ENCODE measurements at regions of chr9 and their contacts with region 1.

Region 1: DNA sequence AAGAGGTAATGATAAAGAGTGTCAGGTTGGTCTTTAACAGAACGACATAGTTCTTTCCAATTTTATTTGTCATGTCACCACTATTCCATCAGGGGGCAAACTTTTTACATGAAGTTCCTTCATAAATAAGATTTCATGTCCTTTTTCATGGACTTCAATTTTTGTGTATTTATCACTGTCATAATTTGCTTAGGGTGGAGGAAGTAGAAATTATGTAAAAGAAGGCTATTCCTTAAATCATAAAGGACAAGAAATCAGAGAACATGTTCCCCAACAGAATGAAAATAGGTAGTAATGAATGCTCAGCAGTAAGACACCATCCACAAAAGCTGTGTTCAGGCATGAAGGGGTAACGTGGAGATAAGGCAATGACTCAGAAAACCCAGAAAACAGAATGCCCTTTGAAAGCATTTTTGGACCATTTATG is 72.7 kb downstream of the ZFAND5 start:
- DNase-seq: no peak
- ATAC-seq: peak in 1 of 4 donors; percentile 65
- H3K4me3 ChIP-seq: no peak overlapping the region
- H3K27ac ChIP-seq: peak overlapping the region in 1 of 12 donors; percentile 74
- H3K4me1 ChIP-seq: peaks cover 0 to 28% (median 3%) of the 10 kb centered on the region in 12 donors
- H3K27me3 ChIP-seq: no peaks in the 10 kb centered on the region
- CTCF ChIP-seq: peak; percentile 39 to 80 (median 66)
- POLR2A ChIP-seq: no peak

Region 2: DNA sequence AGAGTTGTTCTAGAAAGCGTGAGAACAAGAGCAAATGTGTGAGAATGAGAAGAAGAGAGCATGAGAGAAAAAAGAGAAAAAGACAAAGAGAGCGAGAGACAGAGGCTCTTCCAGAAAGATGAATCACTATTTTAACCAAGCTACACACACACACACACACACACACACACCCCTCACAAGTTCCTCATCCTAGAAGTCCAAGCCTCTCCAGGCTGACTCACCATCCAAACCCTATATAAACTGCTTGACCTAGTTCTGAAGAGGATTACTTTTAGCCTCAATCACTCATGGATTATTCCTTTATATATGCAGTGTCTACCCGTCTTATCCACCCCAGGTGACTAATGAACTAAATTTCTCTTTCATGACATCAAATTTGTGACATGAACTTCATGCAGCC is 269.4 kb before region 1 on chr9:
- intact Hi-C with region 1: no loop called
- DNase-seq: no peak
- ATAC-seq: no peak
- H3K4me3 ChIP-seq: no peak overlapping the region
- H3K27ac ChIP-seq: no peak overlapping the region
- H3K4me1 ChIP-seq: peaks cover 0 to 3% (median 0%) of the 10 kb centered on the region in 12 donors
- H3K27me3 ChIP-seq: no peaks in the 10 kb centered on the region
- CTCF ChIP-seq: no peak
- POLR2A ChIP-seq: no peak

Region 3: GRCh38 chr9:72464857-72465592 is 172.8 kb after region 1 on chr9:
- intact Hi-C with region 1: loop called in 2 of 10 experiments (anchors 10 kb)
- DNase-seq: peak in 1 of 5 donors; percentile 12
- ATAC-seq: peak in 3 of 4 donors; percentile 51 to 65 (median 53)
- H3K4me3 ChIP-seq: peak overlapping the region in 5 of 12 donors; percentile 2 to 32 (median 24)
- H3K27ac ChIP-seq: peak overlapping the region in 6 of 12 donors; percentile 8 to 72 (median 20)
- H3K4me1 ChIP-seq: peaks cover 0 to 17% (median 0%) of the 10 kb centered on the region in 12 donors
- H3K27me3 ChIP-seq: no peaks in the 10 kb centered on the region
- CTCF ChIP-seq: no peak
- POLR2A ChIP-seq: no peak

Region 4: DNA sequence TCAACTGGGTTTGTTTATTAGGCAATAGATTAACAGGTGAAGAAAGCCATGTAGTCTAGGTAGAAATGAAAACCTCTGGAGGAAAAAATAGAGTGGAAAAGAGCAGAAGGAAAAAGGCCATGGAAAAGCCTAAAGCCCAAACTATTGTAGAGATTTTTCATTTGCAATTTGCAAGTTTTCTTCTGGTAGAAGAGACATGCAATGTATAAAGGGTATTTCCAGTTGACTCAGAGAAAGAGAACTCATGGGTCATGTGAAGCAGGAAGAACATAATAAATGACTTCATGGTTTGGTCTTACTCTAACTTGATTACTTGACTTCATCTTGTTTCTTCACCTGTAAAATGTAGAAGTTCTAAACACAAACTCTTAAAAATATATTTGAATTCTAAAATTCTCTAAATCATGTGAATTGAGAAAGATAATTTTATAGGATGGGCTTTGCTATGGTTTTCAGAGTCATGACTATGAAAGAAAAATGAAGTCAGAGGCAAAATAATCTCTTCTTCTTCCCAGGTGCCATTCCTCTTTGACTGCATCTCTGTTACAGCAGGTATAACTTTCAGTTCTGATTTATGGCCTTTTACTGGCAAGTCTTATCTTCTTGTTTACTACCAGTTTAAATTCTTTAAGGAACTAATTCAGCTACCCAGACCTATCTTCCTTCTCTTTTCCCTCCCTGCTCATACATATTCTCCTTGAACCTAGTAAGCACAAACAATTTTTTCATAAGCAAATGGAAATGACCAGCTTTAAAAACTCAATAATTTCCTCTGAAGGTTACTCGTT is 181.4 kb after region 1 on chr9:
- intact Hi-C with region 1: loop called in 2 of 10 experiments (anchors 10 kb)
- DNase-seq: no peak
- ATAC-seq: no peak
- H3K4me3 ChIP-seq: no peak overlapping the region
- H3K27ac ChIP-seq: peak overlapping the region in 1 of 12 donors; percentile 48
- H3K4me1 ChIP-seq: peaks cover 0 to 24% (median 7%) of the 10 kb centered on the region in 12 donors
- H3K27me3 ChIP-seq: no peaks in the 10 kb centered on the region
- CTCF ChIP-seq: no peak
- POLR2A ChIP-seq: no peak

Measured in heart left ventricle (tissue), 16 donors.